Activated CD4-positive, alpha-beta T cell treated with anti-CD3 and anti-CD28 coated beads, Interleukin-2, amount 10 ng/mL, durations not matched to agents 24 days and 14 days (primary cell): ENCODE measurements at regions of chr11 and their contacts with region 1.

Region 1: GRCh38 chr11:66694732-66695207 is 17.1 kb upstream of the RBM4B start:
- DNase-seq: peak; percentile 95
- H3K4me3 Mint-ChIP-seq: no peak overlapping the region
- H3K27ac Mint-ChIP-seq: no peak overlapping the region
- H3K4me1 Mint-ChIP-seq: no peaks in the 10 kb centered on the region
- H3K27me3 Mint-ChIP-seq: no peaks in the 10 kb centered on the region

Region 2: GRCh38 chr11:66835768-66836405 is 141.1 kb after region 1 on chr11:
- intact Hi-C with region 1: loop called (anchors 1 kb)
- DNase-seq: no peak
- H3K4me3 Mint-ChIP-seq: no peak overlapping the region
- H3K27ac Mint-ChIP-seq: no peak overlapping the region
- H3K4me1 Mint-ChIP-seq: peaks cover 19% of the 10 kb centered on the region
- H3K27me3 Mint-ChIP-seq: no peaks in the 10 kb centered on the region

Region 3: GRCh38 chr11:66883016-66883968 is 188.5 kb after region 1 on chr11:
- intact Hi-C with region 1: loop called (anchors 5 kb)
- DNase-seq: peak; percentile 89
- H3K4me3 Mint-ChIP-seq: no peak overlapping the region
- H3K27ac Mint-ChIP-seq: no peak overlapping the region
- H3K4me1 Mint-ChIP-seq: peaks cover 10% of the 10 kb centered on the region
- H3K27me3 Mint-ChIP-seq: no peaks in the 10 kb centered on the region